CD8-positive, alpha-beta T cell (primary cell): ENCODE measurements at regions of chr1 and their contacts with region 1.

Region 1: GRCh38 chr1:92485381-92486257 is 1.1 kb downstream of the GFI1 start:
- DNase-seq: peak; percentile 66 to 90 (median 83)
- ATAC-seq: peak; percentile 64
- H3K4me3 ChIP-seq: peak overlapping the region; percentile 84 to 94
- H3K4me3 Mint-ChIP-seq: peak overlapping the region; percentile 95
- H3K27ac ChIP-seq: peak overlapping the region; percentile 67 to 73
- H3K27ac Mint-ChIP-seq: peak overlapping the region; percentile 94
- H3K4me1 ChIP-seq: peaks cover 42% of the 10 kb centered on the region
- H3K4me1 Mint-ChIP-seq: peaks cover 39% of the 10 kb centered on the region
- H3K27me3 ChIP-seq: no peaks in the 10 kb centered on the region
- H3K27me3 Mint-ChIP-seq: no peaks in the 10 kb centered on the region
- CTCF ChIP-seq: peak; percentile 42

Region 2: GRCh38 chr1:91803847-91804545 is 681.6 kb before region 1 on chr1:
- CTCF ChIA-PET with region 1: no interaction called
- POLR2A ChIA-PET with region 1: no interaction called
- intact Hi-C with region 1: loop called (anchors 5 to 10 kb)
- DNase-seq: peak; percentile 45 to 96 (median 77)
- ATAC-seq: peak; percentile 55
- H3K4me3 ChIP-seq: peak overlapping the region; percentile 37 to 51
- H3K4me3 Mint-ChIP-seq: peak overlapping the region; percentile 70
- H3K27ac ChIP-seq: peak overlapping the region; percentile 98 to 99
- H3K27ac Mint-ChIP-seq: peak overlapping the region; percentile 97
- H3K4me1 ChIP-seq: peaks cover 34% of the 10 kb centered on the region
- H3K4me1 Mint-ChIP-seq: peaks cover 52% of the 10 kb centered on the region
- H3K27me3 ChIP-seq: no peaks in the 10 kb centered on the region
- H3K27me3 Mint-ChIP-seq: no peaks in the 10 kb centered on the region
- CTCF ChIP-seq: no peak

Region 3: GRCh38 chr1:92259350-92259749 is 226.3 kb before region 1 on chr1:
- CTCF ChIA-PET with region 1: no interaction called
- POLR2A ChIA-PET with region 1: no interaction called
- intact Hi-C with region 1: no loop called
- DNase-seq: no peak
- ATAC-seq: no peak
- H3K4me3 ChIP-seq: no peak overlapping the region
- H3K4me3 Mint-ChIP-seq: no peak overlapping the region
- H3K27ac ChIP-seq: no peak overlapping the region
- H3K27ac Mint-ChIP-seq: no peak overlapping the region
- H3K4me1 ChIP-seq: no peaks in the 10 kb centered on the region
- H3K4me1 Mint-ChIP-seq: no peaks in the 10 kb centered on the region
- H3K27me3 ChIP-seq: no peaks in the 10 kb centered on the region
- H3K27me3 Mint-ChIP-seq: no peaks in the 10 kb centered on the region
- CTCF ChIP-seq: no peak

Region 4: DNA sequence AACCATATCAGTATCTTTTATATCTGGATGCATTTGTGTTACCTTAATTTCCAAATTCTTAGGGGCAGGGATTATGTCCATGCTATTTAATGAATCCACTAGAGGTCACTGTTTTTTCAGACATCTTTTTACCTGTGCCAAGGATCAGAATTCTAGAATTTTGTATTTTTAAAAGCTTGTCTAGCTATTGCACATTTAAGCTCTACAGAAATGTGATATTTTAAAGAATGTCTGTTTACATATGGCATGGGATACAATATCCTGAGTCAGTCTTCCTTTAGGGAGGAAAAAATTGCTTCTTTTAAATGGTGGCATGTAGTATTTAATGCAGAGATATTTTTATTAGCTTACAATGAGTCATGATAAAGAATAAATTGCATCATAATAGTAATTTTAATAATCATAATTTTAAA is 175.4 kb before region 1 on chr1:
- CTCF ChIA-PET with region 1: interaction called, 54 read pairs
- POLR2A ChIA-PET with region 1: interaction called, 32 read pairs
- intact Hi-C with region 1: loop called (anchors 2 to 5 kb)
- DNase-seq: peak in 2 of 9 experiments; percentile 52 to 66
- ATAC-seq: peak; percentile 61
- H3K4me3 ChIP-seq: no peak overlapping the region
- H3K4me3 Mint-ChIP-seq: no peak overlapping the region
- H3K27ac ChIP-seq: no peak overlapping the region
- H3K27ac Mint-ChIP-seq: no peak overlapping the region
- H3K4me1 ChIP-seq: peaks cover 18% of the 10 kb centered on the region
- H3K4me1 Mint-ChIP-seq: peaks cover 39% of the 10 kb centered on the region
- H3K27me3 ChIP-seq: no peaks in the 10 kb centered on the region
- H3K27me3 Mint-ChIP-seq: no peaks in the 10 kb centered on the region
- CTCF ChIP-seq: peak; percentile 75

Region 5: GRCh38 chr1:92461364-92462097 is 24.1 kb before region 1 on chr1:
- CTCF ChIA-PET with region 1: interaction called, 3 read pairs
- POLR2A ChIA-PET with region 1: no interaction called
- intact Hi-C with region 1: loop called in 1 of 2 experiments (anchors 2 kb)
- DNase-seq: peak in 2 of 9 experiments; percentile 38 to 57
- ATAC-seq: no peak
- H3K4me3 ChIP-seq: no peak overlapping the region
- H3K4me3 Mint-ChIP-seq: no peak overlapping the region
- H3K27ac ChIP-seq: no peak overlapping the region
- H3K27ac Mint-ChIP-seq: no peak overlapping the region
- H3K4me1 ChIP-seq: peaks cover 19% of the 10 kb centered on the region
- H3K4me1 Mint-ChIP-seq: peaks cover 45% of the 10 kb centered on the region
- H3K27me3 ChIP-seq: no peaks in the 10 kb centered on the region
- H3K27me3 Mint-ChIP-seq: no peaks in the 10 kb centered on the region
- CTCF ChIP-seq: no peak

Region 6: GRCh38 chr1:92583821-92584760 is 98.5 kb after region 1 on chr1:
- CTCF ChIA-PET with region 1: interaction called, 8 read pairs
- POLR2A ChIA-PET with region 1: interaction called, 25 read pairs
- intact Hi-C with region 1: loop called (anchors 1 to 5 kb)
- DNase-seq: peak in 2 of 9 experiments; percentile 57 to 76
- ATAC-seq: peak; percentile 92
- H3K4me3 ChIP-seq: peak overlapping the region in 1 of 2 experiments; percentile 18
- H3K4me3 Mint-ChIP-seq: peak overlapping the region; percentile 68
- H3K27ac ChIP-seq: peak overlapping the region; percentile 16 to 53
- H3K27ac Mint-ChIP-seq: peak overlapping the region; percentile 49
- H3K4me1 ChIP-seq: peaks cover 22% of the 10 kb centered on the region
- H3K4me1 Mint-ChIP-seq: peaks cover 57% of the 10 kb centered on the region
- H3K27me3 ChIP-seq: no peaks in the 10 kb centered on the region
- H3K27me3 Mint-ChIP-seq: no peaks in the 10 kb centered on the region
- CTCF ChIP-seq: no peak

Region 7: DNA sequence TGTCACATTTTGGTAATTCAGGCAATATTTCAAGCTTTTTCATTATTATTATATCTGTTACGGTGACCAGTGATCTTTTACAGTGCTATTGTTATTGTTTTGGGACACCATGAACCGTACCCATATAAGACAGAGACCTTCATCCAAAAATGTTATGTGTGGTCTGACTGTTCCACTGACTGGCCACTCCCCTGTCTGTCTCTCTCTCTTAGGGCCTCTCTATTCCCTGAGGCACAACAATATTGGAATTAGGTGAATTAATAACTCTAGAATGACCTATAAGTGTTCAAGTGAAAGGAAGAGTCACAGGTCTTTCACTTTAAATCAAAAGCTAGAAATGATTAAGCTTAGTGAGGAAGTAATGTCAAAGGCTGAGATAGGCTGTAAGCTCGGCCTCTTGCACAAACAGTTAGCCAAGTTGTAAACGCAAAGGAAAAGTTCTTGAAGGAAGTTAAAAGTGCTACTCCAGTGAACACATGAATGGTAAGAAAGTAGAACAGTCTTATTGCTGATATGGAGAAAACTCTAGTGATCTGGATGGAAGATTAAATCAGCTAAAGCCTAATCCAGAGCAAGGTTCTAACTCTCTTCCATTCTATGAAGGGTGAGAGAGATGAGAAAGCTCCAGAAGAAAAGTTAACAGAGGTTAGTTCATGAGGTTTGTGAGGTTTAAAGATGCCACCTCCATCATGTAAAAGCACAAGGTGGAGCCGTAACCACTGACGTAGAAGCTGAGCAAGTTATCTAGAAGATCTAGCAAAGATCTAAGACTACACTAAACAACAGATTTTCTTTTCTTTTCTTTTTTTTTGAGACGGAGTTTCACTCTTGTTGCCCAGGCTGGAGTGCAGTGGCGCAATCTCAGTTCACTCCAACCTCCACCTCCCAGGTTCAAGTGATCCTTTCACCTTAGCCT is 495.4 kb after region 1 on chr1:
- CTCF ChIA-PET with region 1: no interaction called
- POLR2A ChIA-PET with region 1: no interaction called
- intact Hi-C with region 1: loop called in 1 of 2 experiments (anchors 10 kb)
- DNase-seq: peak; percentile 20 to 93 (median 48)
- ATAC-seq: peak; percentile 93
- H3K4me3 ChIP-seq: peak overlapping the region in 1 of 2 experiments; percentile 12
- H3K4me3 Mint-ChIP-seq: peak overlapping the region; percentile 66
- H3K27ac ChIP-seq: peak overlapping the region; percentile 72 to 93
- H3K27ac Mint-ChIP-seq: peak overlapping the region; percentile 96
- H3K4me1 ChIP-seq: peaks cover 23% of the 10 kb centered on the region
- H3K4me1 Mint-ChIP-seq: peaks cover 25% of the 10 kb centered on the region
- H3K27me3 ChIP-seq: no peaks in the 10 kb centered on the region
- H3K27me3 Mint-ChIP-seq: no peaks in the 10 kb centered on the region
- CTCF ChIP-seq: no peak